WTC11 (cell line): ENCODE measurements at regions of chrX and their contacts with region 1.

Region 1: GRCh38 chrX:13764765-13765164 is 30.2 kb downstream of the OFD1 start:
- DNase-seq: peak; percentile 51
- ATAC-seq: peak; percentile 83
- H3K4me3 Mint-ChIP-seq: no peak overlapping the region
- H3K27ac Mint-ChIP-seq: no peak overlapping the region
- H3K4me1 Mint-ChIP-seq: peaks cover 44% of the 10 kb centered on the region
- H3K27me3 Mint-ChIP-seq: no peaks in the 10 kb centered on the region
- CTCF ChIP-seq: no peak

Region 2: DNA sequence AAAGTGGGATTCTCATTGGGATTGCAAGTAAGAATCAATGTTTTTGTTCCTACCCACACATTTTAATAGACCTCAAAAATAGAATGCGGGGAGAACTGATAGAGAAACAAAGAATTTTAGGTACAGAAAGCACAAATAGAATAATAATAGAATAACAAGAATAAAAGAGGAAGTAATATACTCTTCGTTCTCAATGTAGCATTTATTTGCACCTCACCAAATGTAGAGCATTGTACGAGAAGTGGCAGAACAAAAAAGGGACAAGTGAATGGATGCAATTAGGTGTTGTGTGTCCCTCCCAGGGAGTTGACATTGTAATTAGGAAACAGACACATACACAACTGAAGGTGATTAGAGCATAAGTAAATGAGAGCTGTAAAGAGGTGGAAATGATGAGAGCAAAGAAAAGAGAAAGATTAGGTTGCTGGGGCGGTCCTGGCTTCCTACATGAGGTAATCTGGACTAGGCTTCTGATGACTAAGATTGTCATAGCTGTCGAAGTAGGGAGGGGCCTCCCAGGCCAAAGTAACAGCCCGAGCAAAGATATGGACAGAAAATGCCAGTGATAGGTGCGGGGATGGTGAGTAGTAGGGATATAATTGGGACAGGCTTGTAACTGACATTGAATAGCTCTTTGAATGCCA is 65.5 kb before region 1 on chrX:
- CTCF ChIA-PET with region 1: no interaction called
- POLR2A ChIA-PET with region 1: no interaction called
- DNase-seq: no peak
- ATAC-seq: no peak
- H3K4me3 Mint-ChIP-seq: no peak overlapping the region
- H3K27ac Mint-ChIP-seq: no peak overlapping the region
- H3K4me1 Mint-ChIP-seq: peaks cover 30% of the 10 kb centered on the region
- H3K27me3 Mint-ChIP-seq: no peaks in the 10 kb centered on the region
- CTCF ChIP-seq: no peak

Region 3: DNA sequence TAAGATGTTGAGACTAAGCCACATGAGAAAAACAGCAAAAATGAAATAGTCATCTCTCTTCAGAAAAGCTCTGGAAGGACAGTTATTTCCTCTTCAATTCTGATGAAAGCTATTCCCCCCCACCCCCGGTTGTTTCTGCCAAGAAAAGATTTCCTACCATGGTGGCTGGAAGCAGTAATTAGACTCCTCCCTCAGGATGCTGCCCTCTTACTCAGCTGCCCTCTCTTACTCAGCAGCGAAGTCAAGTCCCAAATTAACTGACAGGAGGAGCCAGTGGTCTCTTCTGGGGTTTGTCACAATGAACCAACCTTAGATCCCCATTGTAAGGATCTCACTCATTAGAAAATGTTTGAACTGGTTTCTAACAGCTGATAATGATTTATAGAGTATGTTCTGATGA is 14.2 kb after region 1 on chrX:
- CTCF ChIA-PET with region 1: interaction called, 10 read pairs
- POLR2A ChIA-PET with region 1: interaction called, 8 read pairs
- DNase-seq: no peak
- ATAC-seq: peak; percentile 67
- H3K4me3 Mint-ChIP-seq: no peak overlapping the region
- H3K27ac Mint-ChIP-seq: no peak overlapping the region; the same call in 1 of the 2 replicates
- H3K4me1 Mint-ChIP-seq: peaks cover 20% of the 10 kb centered on the region
- H3K27me3 Mint-ChIP-seq: no peaks in the 10 kb centered on the region
- CTCF ChIP-seq: no peak